ENCODE measurements at regions of chr2 and their contacts with region 1.

Region 1: GRCh38 chr2:238288650-238289573 is 502 bp upstream of the PER2 start:
- DNase-seq: peak; percentile 97
- H3K4me3 Mint-ChIP-seq: peak overlapping the region; percentile 90
- H3K27ac Mint-ChIP-seq: peak overlapping the region; percentile 97
- H3K4me1 Mint-ChIP-seq: peaks cover 62% of the 10 kb centered on the region
- H3K27me3 Mint-ChIP-seq: no peaks in the 10 kb centered on the region
- CTCF ChIP-seq: no peak

Region 2: DNA sequence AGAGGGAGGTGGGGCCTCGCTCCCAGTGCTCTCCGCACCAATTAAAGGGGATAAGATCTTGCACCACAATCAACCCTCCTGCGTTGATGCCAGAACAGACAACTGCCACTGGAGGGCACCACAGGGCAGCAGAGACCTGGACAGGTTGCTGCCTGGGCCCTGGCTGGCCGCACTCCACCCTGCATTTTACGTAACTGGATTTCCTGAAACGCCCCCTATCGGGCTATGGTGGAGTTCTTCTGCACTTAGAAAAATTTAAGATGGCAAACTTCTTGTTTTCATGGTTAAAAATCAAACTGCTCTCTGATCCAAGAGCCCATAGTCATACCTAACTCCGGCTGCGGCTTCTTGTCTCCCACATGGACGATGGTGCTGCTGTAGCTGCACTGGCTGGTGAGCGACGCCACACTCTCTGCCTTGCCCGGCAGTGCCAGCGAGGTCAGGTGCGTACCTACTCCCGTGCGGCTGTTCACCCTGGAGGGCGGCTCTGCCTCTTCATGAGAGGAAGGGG is 32.3 kb before region 1 on chr2:
- CTCF ChIA-PET with region 1: no interaction called
- intact Hi-C with region 1: no loop called
- DNase-seq: peak; percentile 93
- H3K4me3 Mint-ChIP-seq: no peak overlapping the region
- H3K27ac Mint-ChIP-seq: no peak overlapping the region
- H3K4me1 Mint-ChIP-seq: no peaks in the 10 kb centered on the region
- H3K27me3 Mint-ChIP-seq: no peaks in the 10 kb centered on the region
- CTCF ChIP-seq: peak; percentile 95

Region 3: GRCh38 chr2:238305092-238305862 is 16.4 kb after region 1 on chr2:
- CTCF ChIA-PET with region 1: interaction called, 15 read pairs
- intact Hi-C with region 1: no loop called
- DNase-seq: no peak
- H3K4me3 Mint-ChIP-seq: no peak overlapping the region
- H3K27ac Mint-ChIP-seq: no peak overlapping the region
- H3K4me1 Mint-ChIP-seq: peaks cover 6% of the 10 kb centered on the region
- H3K27me3 Mint-ChIP-seq: no peaks in the 10 kb centered on the region
- CTCF ChIP-seq: peak; percentile 33

Region 4: GRCh38 chr2:238320246-238320647 is 31.3 kb after region 1 on chr2 and contains the start of gene TRAF3IP1:
- CTCF ChIA-PET with region 1: no interaction called
- intact Hi-C with region 1: loop called (anchors 5 kb)
- DNase-seq: peak; percentile 96
- H3K4me3 Mint-ChIP-seq: peak within 1 kb of the TSS; percentile 72
- H3K27ac Mint-ChIP-seq: peak within 1 kb of the TSS; percentile 85
- H3K4me1 Mint-ChIP-seq: peaks cover 9% of the 10 kb centered on the region
- H3K27me3 Mint-ChIP-seq: no peaks in the 10 kb centered on the region
- CTCF ChIP-seq: no peak
- total RNA-seq, gene TRAF3IP1: 18.6 and 21.2 TPM in 2 replicates

Region 5: GRCh38 chr2:240111251-240111650 is 1822.3 kb after region 1 on chr2:
- CTCF ChIA-PET with region 1: no interaction called
- intact Hi-C with region 1: no loop called
- DNase-seq: no peak
- H3K4me3 Mint-ChIP-seq: no peak overlapping the region
- H3K27ac Mint-ChIP-seq: no peak overlapping the region
- H3K4me1 Mint-ChIP-seq: no peaks in the 10 kb centered on the region
- H3K27me3 Mint-ChIP-seq: peaks cover 94% of the 10 kb centered on the region
- CTCF ChIP-seq: no peak